Activated B cell treated with CpG ODN at 0.5 μM for 24 hours (primary cell): ENCODE measurements at regions of chr15 and their contacts with region 1.

Region 1: GRCh38 chr15:66504563-66505429 is at the starts of genes RPL4 and ZWILCH:
- DNase-seq: peak; percentile 70
- ATAC-seq: peak; percentile 85
- H3K4me3 Mint-ChIP-seq: peak within 1 kb of the TSS; percentile 100
- H3K27ac Mint-ChIP-seq: peak within 1 kb of the TSS; percentile 100
- H3K4me1 Mint-ChIP-seq: peaks cover 42% of the 10 kb centered on the region
- H3K27me3 Mint-ChIP-seq: no peaks in the 10 kb centered on the region
- CTCF ChIP-seq: no peak
- total RNA-seq, gene RPL4: 3,690 and 4,303 TPM in 2 replicates
- total RNA-seq, gene ZWILCH: 8.4 and 13.7 TPM in 2 replicates

Region 2: DNA sequence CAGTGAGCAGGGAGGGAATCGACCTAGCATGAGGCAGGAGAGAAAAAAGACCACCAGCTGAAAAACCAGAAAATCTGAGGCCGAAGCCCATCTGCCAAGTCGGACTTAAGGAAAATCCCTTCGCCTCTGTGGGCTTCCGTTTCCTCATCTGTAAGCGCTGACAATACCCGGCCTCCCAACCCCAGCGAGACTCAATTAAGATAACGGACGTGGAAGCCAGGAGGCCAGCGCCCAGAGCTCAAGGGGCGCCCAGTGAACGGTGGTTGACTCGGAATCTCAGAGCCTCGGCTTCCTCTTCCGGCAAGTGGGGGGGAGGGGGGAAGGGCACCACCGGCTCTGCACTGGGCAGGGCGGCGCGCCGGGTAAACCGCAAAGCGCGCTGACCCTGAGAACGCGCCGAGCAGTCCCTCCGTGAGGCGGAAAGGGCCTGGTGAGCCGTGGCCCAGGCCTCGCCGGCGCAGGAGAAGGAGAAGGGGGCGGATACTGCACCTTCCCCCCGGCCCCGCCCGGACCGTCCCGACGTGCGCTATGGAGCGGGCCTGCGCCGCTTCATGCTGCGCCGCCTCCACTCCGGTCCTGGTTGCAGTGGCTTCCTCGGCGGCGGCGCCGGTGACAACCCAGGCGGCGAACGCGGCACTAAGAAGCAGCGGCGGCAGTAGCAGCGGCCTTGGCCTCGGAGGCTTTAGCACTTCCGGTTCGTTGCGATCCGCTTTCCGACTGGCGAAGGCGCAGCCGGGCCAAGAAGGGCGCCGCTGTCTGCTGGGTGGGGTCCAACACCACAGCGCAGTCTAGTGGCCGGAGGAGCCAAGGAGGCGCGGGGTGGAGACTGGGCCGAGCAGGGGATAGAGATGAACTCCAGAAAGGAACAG is 987.6 kb before region 1 on chr15 and contains the start of gene DPP8:
- CTCF ChIA-PET with region 1: no interaction called
- POLR2A ChIA-PET with region 1: interaction called, 3 read pairs
- intact Hi-C with region 1: loop called (anchors 1 kb)
- DNase-seq: peak; percentile 91
- ATAC-seq: peak; percentile 94
- H3K4me3 Mint-ChIP-seq: peak within 1 kb of the TSS; percentile 96
- H3K27ac Mint-ChIP-seq: peak within 1 kb of the TSS; percentile 89
- H3K4me1 Mint-ChIP-seq: peaks cover 37% of the 10 kb centered on the region
- H3K27me3 Mint-ChIP-seq: no peaks in the 10 kb centered on the region
- CTCF ChIP-seq: no peak
- total RNA-seq, gene DPP8: 43.0 and 52.2 TPM in 2 replicates

Region 3: GRCh38 chr15:66169023-66169422 is 335.8 kb before region 1 on chr15:
- CTCF ChIA-PET with region 1: no interaction called
- POLR2A ChIA-PET with region 1: no interaction called
- intact Hi-C with region 1: no loop called
- DNase-seq: no peak
- ATAC-seq: peak; percentile 49
- H3K4me3 Mint-ChIP-seq: no peak overlapping the region
- H3K27ac Mint-ChIP-seq: no peak overlapping the region
- H3K4me1 Mint-ChIP-seq: no peaks in the 10 kb centered on the region
- H3K27me3 Mint-ChIP-seq: peaks cover 1% of the 10 kb centered on the region
- CTCF ChIP-seq: no peak

Region 4: DNA sequence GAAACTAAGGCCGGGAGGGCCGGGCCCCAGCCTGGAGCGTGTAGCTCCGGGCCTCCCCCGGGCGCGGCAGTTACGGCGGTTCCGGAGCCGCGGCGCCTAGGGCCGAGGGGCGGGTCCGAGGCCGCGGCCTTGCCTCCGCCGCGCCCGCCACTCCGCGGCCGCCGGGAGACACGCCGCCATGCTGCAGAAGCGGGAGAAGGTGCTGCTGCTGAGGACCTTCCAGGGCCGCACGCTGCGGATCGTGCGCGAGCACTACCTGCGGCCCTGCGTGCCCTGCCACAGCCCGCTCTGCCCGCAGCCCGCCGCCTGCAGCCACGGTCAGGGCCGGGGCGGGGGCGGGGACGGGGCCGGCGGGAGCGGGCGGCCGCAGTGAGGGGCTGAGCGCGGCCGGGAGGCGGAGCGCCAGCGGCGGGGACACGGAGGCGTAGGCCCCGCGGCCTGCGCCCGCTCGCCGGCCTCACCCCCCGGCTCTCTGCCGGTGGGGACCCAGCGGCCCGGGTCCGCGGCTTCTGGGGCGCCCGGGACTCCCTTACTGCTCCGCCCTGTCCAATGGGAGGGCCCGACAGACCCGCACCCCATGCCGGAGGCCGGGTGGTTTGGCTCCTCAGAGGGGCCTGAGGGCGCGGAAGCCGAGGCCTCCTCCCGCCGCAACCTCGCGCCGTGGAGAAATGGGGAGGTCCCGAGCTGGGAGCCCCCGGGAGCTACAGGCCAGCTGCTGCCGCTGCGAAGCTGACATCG is 211.2 kb before region 1 on chr15 and contains the start of gene DIS3L:
- CTCF ChIA-PET with region 1: no interaction called
- POLR2A ChIA-PET with region 1: interaction called, 9 read pairs
- intact Hi-C with region 1: loop called (anchors 2 kb)
- DNase-seq: peak; percentile 74
- ATAC-seq: peak; percentile 82
- H3K4me3 Mint-ChIP-seq: peak within 1 kb of the TSS; percentile 82
- H3K27ac Mint-ChIP-seq: peak within 1 kb of the TSS; percentile 89
- H3K4me1 Mint-ChIP-seq: peaks cover 28% of the 10 kb centered on the region
- H3K27me3 Mint-ChIP-seq: no peaks in the 10 kb centered on the region
- CTCF ChIP-seq: no peak
- total RNA-seq, gene DIS3L: 23.8 and 27.2 TPM in 2 replicates

Region 5: GRCh38 chr15:66386204-66387123 is 118.3 kb before region 1 on chr15 and contains the start of gene MAP2K1:
- CTCF ChIA-PET with region 1: interaction called, 4 read pairs
- POLR2A ChIA-PET with region 1: interaction called, 48 read pairs
- intact Hi-C with region 1: loop called (anchors 1 kb)
- DNase-seq: peak; percentile 97
- ATAC-seq: peak; percentile 86
- H3K4me3 Mint-ChIP-seq: peak within 1 kb of the TSS; percentile 95
- H3K27ac Mint-ChIP-seq: peak within 1 kb of the TSS; percentile 97
- H3K4me1 Mint-ChIP-seq: peaks cover 46% of the 10 kb centered on the region
- H3K27me3 Mint-ChIP-seq: no peaks in the 10 kb centered on the region
- CTCF ChIP-seq: peak; percentile 23
- total RNA-seq, gene MAP2K1: 37.9 and 42.0 TPM in 2 replicates

Region 6: DNA sequence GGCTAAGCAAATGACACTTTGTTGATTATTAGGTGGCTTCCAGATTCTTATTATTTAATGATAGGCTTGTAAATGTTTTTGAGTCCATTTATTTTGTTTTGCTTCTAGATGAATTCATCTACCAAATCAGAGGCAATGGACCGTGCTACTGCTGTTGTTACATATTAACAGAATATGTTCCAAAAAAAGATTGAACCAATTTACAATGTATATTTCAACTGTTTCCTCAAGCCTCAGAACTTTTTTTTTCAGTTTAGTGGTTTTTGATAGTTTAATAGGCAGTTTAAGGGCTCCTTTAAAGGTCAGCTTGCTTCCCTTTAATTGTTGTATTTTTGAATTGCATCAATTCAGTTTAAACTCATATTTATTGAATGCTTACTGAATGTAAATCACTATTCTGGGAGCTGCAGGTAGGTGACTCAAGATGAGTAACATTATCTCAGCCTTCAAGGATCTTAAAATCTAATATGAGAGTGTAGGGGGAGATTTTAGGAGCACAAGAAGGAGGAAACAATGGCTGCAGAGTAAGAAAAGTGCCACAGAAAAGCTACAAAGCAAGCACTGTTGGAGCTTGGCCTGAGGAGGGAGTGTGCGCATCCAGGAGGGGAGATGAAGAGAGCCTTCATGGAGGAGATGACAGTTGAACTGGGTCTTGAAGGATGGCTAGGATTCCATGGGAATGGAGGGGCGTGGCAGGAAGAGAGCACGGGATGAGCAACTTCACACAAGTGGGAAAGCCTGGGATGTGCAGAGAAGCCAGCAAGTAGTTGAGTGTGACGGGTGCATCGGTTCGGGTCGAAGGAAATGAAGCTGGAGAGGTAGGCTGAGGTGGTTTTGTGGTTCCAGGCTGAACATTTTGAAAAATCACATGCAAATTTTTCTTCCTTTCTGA is 103.4 kb before region 1 on chr15:
- CTCF ChIA-PET with region 1: no interaction called
- POLR2A ChIA-PET with region 1: no interaction called
- intact Hi-C with region 1: no loop called
- DNase-seq: no peak
- ATAC-seq: peak; percentile 31
- H3K4me3 Mint-ChIP-seq: peak overlapping the region; percentile 72
- H3K27ac Mint-ChIP-seq: no peak overlapping the region
- H3K4me1 Mint-ChIP-seq: peaks cover 61% of the 10 kb centered on the region
- H3K27me3 Mint-ChIP-seq: no peaks in the 10 kb centered on the region
- CTCF ChIP-seq: no peak

Region 7: GRCh38 chr15:67521029-67521811 is 1016.4 kb after region 1 on chr15 and contains the start of gene C15orf61:
- CTCF ChIA-PET with region 1: no interaction called
- POLR2A ChIA-PET with region 1: no interaction called
- intact Hi-C with region 1: loop called (anchors 5 kb)
- DNase-seq: peak; percentile 88
- ATAC-seq: peak; percentile 81
- H3K4me3 Mint-ChIP-seq: peak within 1 kb of the TSS; percentile 93
- H3K27ac Mint-ChIP-seq: peak within 1 kb of the TSS; percentile 92
- H3K4me1 Mint-ChIP-seq: peaks cover 22% of the 10 kb centered on the region
- H3K27me3 Mint-ChIP-seq: no peaks in the 10 kb centered on the region
- CTCF ChIP-seq: no peak
- total RNA-seq, gene C15orf61: 3.3 and 4.2 TPM in 2 replicates